ENCODE measurements at regions of chr1 and their contacts with region 1.

Region 1: GRCh38 chr1:156359973-156360372 is 9.0 kb upstream of the RHBG start:
- DNase-seq: peak; percentile 69
- H3K4me3 ChIP-seq: no peak overlapping the region
- H3K27ac ChIP-seq: no peak overlapping the region
- H3K4me1 ChIP-seq: no peaks in the 10 kb centered on the region; a peak in 1 of 4 replicates
- H3K27me3 ChIP-seq: peaks cover 5% of the 10 kb centered on the region; the same call in 1 of the 2 replicates
- CTCF ChIP-seq: peak; percentile 61
- EP300 ChIP-seq: no peak
- RAD21 ChIP-seq: peak; percentile 84

Region 2: GRCh38 chr1:155946633-155947219 is 413.2 kb before region 1 on chr1:
- CTCF ChIA-PET with region 1: no interaction called
- POLR2A ChIA-PET with region 1: no interaction called
- DNase-seq: no peak
- H3K4me3 ChIP-seq: no peak overlapping the region
- H3K27ac ChIP-seq: no peak overlapping the region
- H3K4me1 ChIP-seq: peaks cover 0 to under 1% of the 10 kb centered on the region in 2 experiments; a peak in 1 of 4 replicates
- H3K27me3 ChIP-seq: no peaks in the 10 kb centered on the region
- CTCF ChIP-seq: no peak
- EP300 ChIP-seq: no peak
- RAD21 ChIP-seq: no peak

Region 3: GRCh38 chr1:156338180-156338973 is 21.6 kb before region 1 on chr1 and contains the starts of genes CCT3 and TSACC:
- CTCF ChIA-PET with region 1: interaction called, 12 read pairs
- POLR2A ChIA-PET with region 1: interaction called, 4 read pairs
- DNase-seq: peak; percentile 94
- H3K4me3 ChIP-seq: peak within 1 kb of the TSS; percentile 63 to 78
- H3K27ac ChIP-seq: peak within 1 kb of the TSS; percentile 67 to 94
- H3K4me1 ChIP-seq: peaks cover 9 to 12% of the 10 kb centered on the region in 2 experiments; a peak in 3 of 4 replicates
- H3K27me3 ChIP-seq: no peaks in the 10 kb centered on the region
- CTCF ChIP-seq: no peak
- EP300 ChIP-seq: peak in 1 of 2 experiments; percentile 46; a peak in 2 of 4 replicates
- RAD21 ChIP-seq: no peak
- polyA plus RNA-seq, gene CCT3: 295 and 359 TPM in 2 replicates
- polyA plus RNA-seq, gene TSACC: 1.5 TPM in 2 replicates

Region 4: DNA sequence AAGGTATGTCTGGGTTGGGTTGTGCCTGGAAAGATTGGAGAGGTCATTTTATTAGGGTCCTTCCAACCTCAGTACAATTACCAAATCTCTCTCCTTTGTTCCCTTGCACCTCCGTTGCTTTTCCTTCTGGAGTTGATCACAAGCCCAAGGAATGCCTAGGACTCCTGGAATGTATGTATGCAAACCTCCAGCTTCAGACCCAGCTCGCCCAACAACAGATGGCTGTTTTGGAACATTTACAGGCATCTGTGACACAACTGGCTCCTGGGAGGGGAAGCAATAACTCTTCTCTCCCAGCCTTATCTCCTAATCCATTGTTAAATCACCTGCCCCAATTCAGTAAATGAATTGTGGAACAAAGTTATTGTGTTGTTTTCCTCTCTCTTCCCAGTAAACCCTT is 13.3 kb before region 1 on chr1:
- CTCF ChIA-PET with region 1: interaction called, 14 read pairs
- POLR2A ChIA-PET with region 1: interaction called, 3 read pairs
- DNase-seq: no peak
- H3K4me3 ChIP-seq: no peak overlapping the region
- H3K27ac ChIP-seq: peak overlapping the region; percentile 42 to 87; a peak in 3 of 4 replicates
- H3K4me1 ChIP-seq: peaks cover 0 to 23% of the 10 kb centered on the region in 2 experiments; a peak in 2 of 4 replicates
- H3K27me3 ChIP-seq: no peaks in the 10 kb centered on the region
- CTCF ChIP-seq: no peak
- EP300 ChIP-seq: peak in 1 of 2 experiments; percentile 31; a peak in 1 of 4 replicates
- RAD21 ChIP-seq: no peak

Region 5: GRCh38 chr1:156394835-156395461 is 35.0 kb after region 1 on chr1:
- CTCF ChIA-PET with region 1: no interaction called
- POLR2A ChIA-PET with region 1: no interaction called
- DNase-seq: no peak
- H3K4me3 ChIP-seq: no peak overlapping the region
- H3K27ac ChIP-seq: no peak overlapping the region
- H3K4me1 ChIP-seq: peaks cover 0 to 6% of the 10 kb centered on the region in 2 experiments; a peak in 1 of 4 replicates
- H3K27me3 ChIP-seq: no peaks in the 10 kb centered on the region; the same call in 1 of the 2 replicates
- CTCF ChIP-seq: no peak
- EP300 ChIP-seq: no peak
- RAD21 ChIP-seq: no peak

Region 6: GRCh38 chr1:156591432-156592157 is 231.6 kb after region 1 on chr1 and contains the start of gene NAXE:
- CTCF ChIA-PET with region 1: no interaction called
- POLR2A ChIA-PET with region 1: no interaction called
- DNase-seq: peak; percentile 95
- H3K4me3 ChIP-seq: peak within 1 kb of the TSS; percentile 83 to 86
- H3K27ac ChIP-seq: peak within 1 kb of the TSS; percentile 64 to 93
- H3K4me1 ChIP-seq: peaks cover 0 to 16% of the 10 kb centered on the region in 2 experiments; a peak in 2 of 4 replicates
- H3K27me3 ChIP-seq: no peaks in the 10 kb centered on the region
- CTCF ChIP-seq: no peak
- EP300 ChIP-seq: no peak
- RAD21 ChIP-seq: no peak
- polyA plus RNA-seq, gene NAXE: 68.5 and 98.4 TPM in 2 replicates

Measured in SK-N-SH (cell line).